HepG2 (cell line): ENCODE measurements at regions of chr15 and their contacts with region 1.

Region 1: DNA sequence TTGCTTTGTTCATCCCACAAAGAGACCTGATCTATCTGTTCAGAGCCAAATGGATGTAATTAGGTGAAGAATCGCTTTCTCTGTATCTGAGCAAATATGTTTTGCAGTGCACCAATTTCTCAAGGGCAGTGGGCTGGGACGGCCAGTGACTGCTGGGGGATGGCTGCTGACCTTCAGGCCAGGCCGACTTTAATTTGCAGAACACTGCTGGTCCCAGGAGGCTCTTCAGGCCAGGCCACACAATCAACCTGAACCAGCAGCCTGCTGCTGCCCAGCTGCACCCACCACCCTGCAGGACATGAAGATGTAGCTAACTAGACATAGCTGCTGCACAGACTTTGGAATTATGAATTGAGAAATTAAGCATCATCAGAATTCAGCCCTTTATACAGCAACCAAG is 194.4 kb upstream of the ONECUT1 start:
- DNase-seq: no peak
- ATAC-seq: no peak
- H3K4me3 ChIP-seq: no peak overlapping the region
- H3K27ac ChIP-seq: no peak overlapping the region
- H3K4me1 ChIP-seq: no peaks in the 10 kb centered on the region
- H3K27me3 ChIP-seq: peaks cover 0 to 5% of the 10 kb centered on the region in 2 experiments; a peak in 1 of 5 replicates
- CTCF ChIP-seq: no peak
- EP300 ChIP-seq: no peak
- POLR2A ChIP-seq: no peak
- RAD21 ChIP-seq: no peak

Region 2: DNA sequence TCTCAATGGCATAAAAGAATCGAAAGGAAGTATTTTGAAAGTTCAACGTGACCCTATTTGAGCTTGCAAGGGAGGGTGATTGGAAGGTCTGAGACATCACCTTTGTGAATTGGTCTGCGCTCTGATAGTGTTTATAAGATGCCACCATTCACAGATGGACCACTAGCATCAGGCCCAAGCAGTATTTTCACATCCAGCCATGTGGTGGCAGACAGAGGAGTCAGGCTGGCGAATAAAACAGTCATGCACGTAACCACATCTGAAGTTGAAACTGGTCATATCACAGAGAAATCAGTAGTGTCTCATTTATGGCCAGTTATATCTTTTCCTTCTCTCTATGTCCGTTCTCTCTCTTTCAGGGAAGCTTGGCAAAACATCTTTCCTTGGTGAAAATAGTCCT is 24.2 kb before region 1 on chr15:
- CTCF ChIA-PET with region 1: no interaction called
- POLR2A ChIA-PET with region 1: no interaction called
- in situ Hi-C with region 1: no loop called
- intact Hi-C with region 1: loop called (anchors 2 kb)
- DNase-seq: no peak
- ATAC-seq: no peak
- H3K4me3 ChIP-seq: no peak overlapping the region
- H3K27ac ChIP-seq: no peak overlapping the region
- H3K4me1 ChIP-seq: no peaks in the 10 kb centered on the region
- H3K27me3 ChIP-seq: no peaks in the 10 kb centered on the region; a peak in 1 of 5 replicates
- CTCF ChIP-seq: no peak
- EP300 ChIP-seq: no peak
- POLR2A ChIP-seq: no peak
- RAD21 ChIP-seq: no peak

Region 3: DNA sequence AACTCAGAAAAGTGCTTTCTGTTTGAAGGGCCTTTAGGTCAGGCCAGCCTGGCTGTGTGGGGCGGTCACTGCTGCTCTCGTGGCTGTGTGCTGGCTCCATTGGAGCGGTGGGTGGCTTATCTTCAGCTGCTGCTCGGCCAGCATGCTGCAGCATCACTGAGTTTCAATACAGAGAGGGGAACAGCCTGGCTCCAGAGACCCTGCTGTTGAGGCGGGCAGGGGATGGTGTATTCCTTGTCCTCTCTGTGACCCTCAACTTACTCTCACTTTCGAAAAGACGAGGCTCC is 54.1 kb after region 1 on chr15:
- CTCF ChIA-PET with region 1: no interaction called
- POLR2A ChIA-PET with region 1: no interaction called
- in situ Hi-C with region 1: no loop called
- intact Hi-C with region 1: no loop called
- DNase-seq: no peak
- ATAC-seq: peak; percentile 36
- H3K4me3 ChIP-seq: peak overlapping the region in 1 of 3 experiments; percentile 56; a peak in 2 of 6 replicates
- H3K27ac ChIP-seq: no peak overlapping the region
- H3K4me1 ChIP-seq: peaks cover 46% of the 10 kb centered on the region
- H3K27me3 ChIP-seq: no peaks in the 10 kb centered on the region
- CTCF ChIP-seq: no peak
- EP300 ChIP-seq: no peak
- POLR2A ChIP-seq: no peak
- RAD21 ChIP-seq: no peak

Region 4: GRCh38 chr15:53522991-53523390 is 538.5 kb after region 1 on chr15:
- CTCF ChIA-PET with region 1: no interaction called
- POLR2A ChIA-PET with region 1: no interaction called
- in situ Hi-C with region 1: no loop called
- intact Hi-C with region 1: no loop called
- DNase-seq: no peak
- ATAC-seq: no peak
- H3K4me3 ChIP-seq: no peak overlapping the region
- H3K27ac ChIP-seq: no peak overlapping the region
- H3K4me1 ChIP-seq: peaks cover 34% of the 10 kb centered on the region
- H3K27me3 ChIP-seq: no peaks in the 10 kb centered on the region
- CTCF ChIP-seq: no peak
- EP300 ChIP-seq: no peak
- POLR2A ChIP-seq: no peak
- RAD21 ChIP-seq: no peak